Posterior cingulate gyrus (tissue), 11 donors: ENCODE measurements at regions of chr3 and their contacts with region 1.

Region 1: GRCh38 chr3:16247276-16248061 is 17.3 kb downstream of the DPH3 start:
- DNase-seq: peak; percentile 54 to 97 (median 84)

Region 2: GRCh38 chr3:16177962-16178627 is 69.4 kb before region 1 on chr3:
- intact Hi-C with region 1: loop called (anchors 1 kb)
- DNase-seq: peak; percentile 83 to 98 (median 88)

Region 3: DNA sequence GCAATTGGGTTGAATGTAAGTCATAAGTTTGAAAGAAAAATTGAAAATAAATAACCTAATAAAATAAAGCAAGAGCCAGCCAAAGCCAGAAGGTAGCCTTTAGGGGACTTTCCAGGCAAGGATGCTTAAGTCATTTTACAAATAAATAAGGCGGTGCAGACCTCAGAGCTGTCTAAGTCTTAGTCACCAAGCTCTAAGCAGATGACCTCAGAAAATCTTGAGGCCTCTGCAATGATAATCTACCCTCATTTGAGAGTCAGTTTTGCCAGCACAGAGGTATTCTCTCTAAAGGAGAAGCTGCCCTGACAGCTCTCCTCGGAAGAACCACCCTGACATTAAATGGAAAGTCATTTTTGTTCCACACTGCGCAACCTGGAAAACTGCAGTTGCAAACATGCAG is 131.5 kb after region 1 on chr3:
- intact Hi-C with region 1: no loop called
- DNase-seq: no peak

Region 4: GRCh38 chr3:16529264-16529663 is 281.8 kb after region 1 on chr3:
- intact Hi-C with region 1: no loop called
- DNase-seq: no peak